SK-N-SH (cell line): ENCODE measurements at regions of chr12 and their contacts with region 1.

Region 1: DNA sequence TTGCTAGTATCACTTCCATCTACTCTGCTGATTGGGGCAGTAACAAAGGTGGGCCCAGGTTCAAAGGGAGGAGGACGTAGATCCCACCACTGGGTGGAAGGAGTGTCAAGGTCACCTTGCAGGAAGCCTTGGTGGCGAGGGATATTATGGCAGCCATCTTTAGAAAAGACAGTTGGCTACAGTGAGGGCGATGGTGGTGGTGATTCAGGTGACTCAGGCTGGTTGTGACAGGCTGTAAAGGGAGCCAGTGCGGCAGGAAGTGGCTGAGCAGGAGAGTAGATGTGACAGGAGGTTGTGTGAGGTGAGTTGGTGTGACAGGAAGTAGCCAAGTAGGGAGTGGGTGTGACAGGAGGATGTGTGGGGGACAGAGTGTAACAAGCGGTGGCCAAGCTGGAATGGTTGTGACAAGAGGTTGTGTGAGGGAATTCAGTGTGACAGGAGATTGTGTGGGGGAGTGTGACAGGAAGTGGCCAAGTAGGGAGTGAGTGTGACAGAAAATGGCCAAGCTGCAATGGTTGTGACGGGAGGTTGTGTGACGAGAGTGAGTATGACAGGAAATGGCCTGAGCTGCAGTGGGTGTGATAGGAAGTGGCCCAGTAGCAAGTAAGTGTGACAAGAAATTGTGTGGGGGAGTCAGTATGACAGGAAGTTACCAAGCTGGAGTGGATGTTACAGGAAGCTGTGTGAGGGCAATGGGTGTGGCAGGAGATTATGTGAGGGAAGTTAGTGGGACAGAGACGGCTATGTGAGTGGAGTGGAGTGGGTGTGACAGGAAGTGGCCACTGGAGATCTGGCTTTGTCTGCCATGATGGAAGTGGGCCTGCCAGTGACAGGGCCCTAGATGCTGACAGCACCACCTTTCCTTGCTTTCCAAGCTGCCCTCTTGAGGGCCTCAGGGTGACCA is 136.5 kb upstream of the MYL2 start:
- DNase-seq: peak; percentile 50
- H3K4me3 ChIP-seq: no peak overlapping the region
- H3K27ac ChIP-seq: peak overlapping the region in 1 of 2 experiments; percentile 76; a peak in 2 of 4 replicates
- H3K4me1 ChIP-seq: peaks cover 5 to 39% of the 10 kb centered on the region in 2 experiments; a peak in 2 of 4 replicates
- H3K27me3 ChIP-seq: no peaks in the 10 kb centered on the region
- CTCF ChIP-seq: no peak
- EP300 ChIP-seq: no peak
- RAD21 ChIP-seq: no peak

Region 2: DNA sequence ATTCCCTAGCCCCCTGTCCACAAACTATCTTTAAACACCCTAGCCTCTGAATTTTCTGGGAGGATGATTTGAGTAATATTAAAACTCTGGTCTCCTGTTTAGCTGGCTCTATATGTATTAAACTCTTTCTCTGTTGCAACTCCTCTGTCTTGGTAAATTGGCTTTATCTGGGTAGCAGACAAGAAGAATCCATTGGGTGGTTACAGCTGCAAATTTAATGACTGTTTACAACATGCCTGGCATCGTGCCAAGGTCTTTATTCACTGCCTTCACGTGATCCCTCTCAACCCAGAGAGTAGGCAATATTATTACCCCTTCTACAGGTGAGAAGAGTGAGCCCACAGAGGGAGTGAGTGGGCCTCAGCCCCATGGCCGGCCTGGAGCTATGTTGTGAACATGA is 58.7 kb before region 1 on chr12:
- CTCF ChIA-PET with region 1: no interaction called
- POLR2A ChIA-PET with region 1: no interaction called
- DNase-seq: no peak
- H3K4me3 ChIP-seq: no peak overlapping the region
- H3K27ac ChIP-seq: no peak overlapping the region
- H3K4me1 ChIP-seq: peaks cover 0 to 3% of the 10 kb centered on the region in 2 experiments; a peak in 1 of 4 replicates
- H3K27me3 ChIP-seq: no peaks in the 10 kb centered on the region
- CTCF ChIP-seq: no peak
- EP300 ChIP-seq: no peak
- RAD21 ChIP-seq: no peak

Region 3: DNA sequence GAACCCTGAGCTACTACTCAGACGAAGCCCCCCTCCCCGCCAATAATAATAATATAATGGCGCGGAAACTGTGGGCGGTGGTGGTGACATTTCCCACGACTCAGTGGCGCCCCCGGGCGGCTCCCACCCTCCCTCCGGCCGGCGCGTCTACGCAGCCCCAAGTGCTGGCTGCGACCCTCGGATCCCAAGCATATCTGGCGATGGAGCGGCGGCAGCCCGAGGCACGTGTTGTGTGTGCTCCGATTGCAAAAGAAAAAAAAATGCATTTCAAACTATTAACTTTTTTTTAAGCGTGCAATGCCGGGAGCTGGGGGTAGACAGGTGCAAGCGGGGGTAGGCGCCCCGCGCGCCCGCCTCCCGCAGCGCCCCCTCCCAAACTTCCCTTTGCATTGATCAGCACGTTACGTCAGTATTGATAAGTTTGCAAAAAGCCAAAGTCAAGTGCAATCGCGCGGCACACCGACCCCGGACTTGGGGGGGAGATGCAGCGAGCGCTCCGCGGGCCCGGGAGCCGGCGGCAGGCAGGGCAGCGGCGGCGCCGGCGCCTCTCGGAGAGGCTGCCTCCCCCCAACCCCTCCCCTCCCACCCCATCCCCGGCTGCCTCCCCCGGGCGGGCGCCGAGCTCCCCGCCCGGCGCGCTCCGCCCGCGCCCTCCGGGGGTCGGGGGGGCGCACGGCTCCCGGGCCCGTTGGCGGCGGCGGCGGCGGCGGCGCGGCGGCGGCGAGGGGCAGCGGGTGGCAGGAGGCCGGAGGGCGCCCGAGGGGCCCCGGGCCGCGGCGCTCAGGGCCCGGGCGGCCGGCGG is 23.4 kb before region 1 on chr12:
- CTCF ChIA-PET with region 1: interaction called, 23 read pairs
- POLR2A ChIA-PET with region 1: no interaction called
- DNase-seq: peak; percentile 85
- H3K4me3 ChIP-seq: peak overlapping the region in 1 of 2 experiments; percentile 51; a peak in 3 of 4 replicates
- H3K27ac ChIP-seq: peak overlapping the region in 1 of 2 experiments; percentile 67; a peak in 1 of 4 replicates
- H3K4me1 ChIP-seq: peaks cover 0 to 6% of the 10 kb centered on the region in 2 experiments; a peak in 2 of 4 replicates
- H3K27me3 ChIP-seq: peaks cover 43% of the 10 kb centered on the region
- CTCF ChIP-seq: peak; percentile 38
- EP300 ChIP-seq: no peak
- RAD21 ChIP-seq: 0 out of 2 replicates have a peak, but pooled peaks have one; percentile 30

Region 4: DNA sequence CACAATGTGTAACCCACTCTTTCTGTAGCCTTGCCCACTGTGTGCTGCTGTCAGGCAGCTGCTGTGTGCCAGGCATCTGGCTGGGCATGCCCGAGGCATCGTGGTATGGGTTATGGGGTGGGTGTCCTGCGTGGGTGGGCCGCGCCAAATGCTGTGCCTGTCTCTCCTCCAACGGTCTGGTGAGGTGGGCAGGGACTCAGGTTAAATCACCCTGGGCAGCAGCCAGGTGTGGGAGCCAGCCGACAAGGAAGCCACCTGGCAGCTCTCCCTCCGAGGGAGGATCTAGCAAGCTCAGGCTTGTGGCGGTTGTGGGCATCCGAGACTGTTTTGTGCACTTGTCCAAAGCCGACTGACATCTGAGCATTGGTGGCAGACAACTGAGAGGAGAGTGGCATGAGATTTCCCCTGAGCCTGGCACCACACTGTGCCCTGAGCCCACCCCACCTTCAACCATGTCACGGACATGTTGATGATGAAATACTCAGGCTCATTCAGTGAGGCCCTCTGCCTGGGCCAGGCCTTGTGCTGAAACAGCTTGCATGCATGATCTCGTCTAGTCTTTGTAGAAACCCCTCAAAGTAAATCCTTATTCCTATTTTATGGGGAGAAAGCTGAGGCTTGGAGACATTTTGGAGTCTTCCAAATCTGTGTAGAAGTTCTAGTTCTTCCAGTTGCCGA is 45.3 kb after region 1 on chr12:
- CTCF ChIA-PET with region 1: no interaction called
- POLR2A ChIA-PET with region 1: no interaction called
- DNase-seq: no peak
- H3K4me3 ChIP-seq: no peak overlapping the region
- H3K27ac ChIP-seq: no peak overlapping the region
- H3K4me1 ChIP-seq: peaks cover 0 to 13% of the 10 kb centered on the region in 2 experiments; a peak in 1 of 4 replicates
- H3K27me3 ChIP-seq: peaks cover 1% of the 10 kb centered on the region; the same call in 1 of the 2 replicates
- CTCF ChIP-seq: no peak
- EP300 ChIP-seq: no peak
- RAD21 ChIP-seq: no peak